ENCODE measurements at regions of chr5 and their contacts with region 1.

Region 1: DNA sequence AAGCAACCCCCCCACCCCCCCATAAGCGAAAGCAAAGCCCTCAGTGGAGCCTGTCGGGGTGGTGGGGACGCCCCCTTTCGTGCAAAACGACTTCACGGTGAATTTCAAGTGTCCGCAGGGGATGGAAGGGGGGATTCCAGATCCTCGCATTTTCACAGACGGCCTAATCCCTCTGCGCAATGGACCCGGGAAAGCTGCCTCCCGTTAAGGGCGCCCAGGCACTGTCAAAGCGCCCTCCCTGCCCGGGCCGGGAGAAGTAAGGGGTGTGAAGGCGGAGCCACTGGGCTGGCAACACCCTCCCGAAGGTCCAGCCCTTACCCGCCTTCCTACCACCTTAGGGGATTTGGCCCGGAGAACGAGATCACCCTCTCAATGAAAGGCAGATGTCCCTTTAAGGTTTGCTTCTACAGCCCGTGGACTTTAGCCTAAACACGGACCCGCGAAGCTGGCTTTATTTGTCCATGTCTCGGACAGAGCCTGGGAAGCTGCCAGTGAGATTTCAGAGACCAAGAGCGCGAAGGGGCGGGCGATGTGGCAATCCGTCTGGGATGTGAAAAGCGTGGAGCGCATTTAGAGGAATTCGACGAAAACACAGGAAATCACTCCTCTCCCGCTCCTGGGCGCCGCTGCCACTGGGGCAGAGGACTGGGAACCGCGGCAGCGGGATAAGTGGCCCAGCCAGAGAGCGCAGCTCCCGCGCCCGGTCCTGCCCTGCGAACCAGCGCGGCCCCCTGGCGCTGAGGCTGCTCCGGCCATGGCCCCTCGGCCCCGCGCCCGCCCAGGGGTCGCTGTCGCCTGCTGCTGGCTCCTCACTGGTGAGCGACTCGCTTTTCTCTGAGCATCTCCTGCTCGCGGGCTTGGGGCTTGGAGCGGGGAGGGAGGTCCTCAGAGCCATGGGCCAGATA is at the starts of genes ITGA1 and PELO:
- DNase-seq: peak; percentile 79
- ATAC-seq: peak; percentile 94
- total RNA-seq, gene ITGA1: 29.2 TPM
- total RNA-seq, gene PELO: 22.5 TPM

Region 2: GRCh38 chr5:52709171-52709925 is 78.5 kb before region 1 on chr5:
- intact Hi-C with region 1: loop called (anchors 10 kb)
- DNase-seq: no peak
- ATAC-seq: peak; percentile 41

Region 3: DNA sequence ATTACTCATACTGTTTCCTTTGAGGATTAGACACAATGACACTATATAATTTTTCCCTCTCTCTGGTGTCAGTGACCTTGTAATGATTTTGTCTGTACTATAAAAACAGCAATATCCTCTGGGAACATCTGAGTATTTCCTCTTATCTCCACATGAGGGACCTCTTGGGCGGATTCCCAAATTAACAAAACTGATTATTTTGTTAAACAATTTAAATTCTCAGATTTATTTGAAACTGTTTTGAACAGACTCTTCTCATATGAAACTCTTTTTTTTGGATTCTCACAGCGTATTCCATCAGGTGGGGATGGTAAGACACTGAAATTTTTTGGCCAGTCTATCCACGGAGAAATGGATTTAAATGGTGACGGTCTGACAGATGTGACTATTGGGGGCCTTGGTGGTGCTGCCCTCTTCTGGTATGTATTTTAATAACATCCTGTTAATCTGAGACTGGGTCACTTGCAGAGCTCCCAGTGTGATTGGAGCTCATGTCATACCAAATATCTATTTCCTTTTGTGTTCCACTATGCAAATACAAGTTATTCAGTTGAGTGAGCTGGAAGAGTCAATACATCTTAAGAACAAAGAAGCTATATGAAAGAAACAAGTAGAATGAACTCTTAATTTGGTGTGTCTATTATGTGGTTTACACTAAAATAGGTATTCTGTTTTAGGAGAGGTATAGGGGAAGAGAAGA is 127.5 kb after region 1 on chr5:
- intact Hi-C with region 1: loop called (anchors 10 kb)
- DNase-seq: no peak
- ATAC-seq: peak; percentile 94

Measured in left ventricle myocardium superior (tissue), 1 donor.